PC-3 (cell line): ENCODE measurements at regions of chr5 and their contacts with region 1.

Region 1: GRCh38 chr5:80982093-80982492 is 21.9 kb downstream of the RASGRF2 start:
- DNase-seq: no peak
- ATAC-seq: no peak
- H3K4me3 ChIP-seq: no peak overlapping the region
- H3K27ac ChIP-seq: no peak overlapping the region
- H3K4me1 ChIP-seq: 0 out of 2 replicates have a peak, but pooled peaks cover under 1% of the 10 kb centered on the region
- H3K27me3 ChIP-seq: no peaks in the 10 kb centered on the region
- CTCF ChIP-seq: no peak

Region 2: DNA sequence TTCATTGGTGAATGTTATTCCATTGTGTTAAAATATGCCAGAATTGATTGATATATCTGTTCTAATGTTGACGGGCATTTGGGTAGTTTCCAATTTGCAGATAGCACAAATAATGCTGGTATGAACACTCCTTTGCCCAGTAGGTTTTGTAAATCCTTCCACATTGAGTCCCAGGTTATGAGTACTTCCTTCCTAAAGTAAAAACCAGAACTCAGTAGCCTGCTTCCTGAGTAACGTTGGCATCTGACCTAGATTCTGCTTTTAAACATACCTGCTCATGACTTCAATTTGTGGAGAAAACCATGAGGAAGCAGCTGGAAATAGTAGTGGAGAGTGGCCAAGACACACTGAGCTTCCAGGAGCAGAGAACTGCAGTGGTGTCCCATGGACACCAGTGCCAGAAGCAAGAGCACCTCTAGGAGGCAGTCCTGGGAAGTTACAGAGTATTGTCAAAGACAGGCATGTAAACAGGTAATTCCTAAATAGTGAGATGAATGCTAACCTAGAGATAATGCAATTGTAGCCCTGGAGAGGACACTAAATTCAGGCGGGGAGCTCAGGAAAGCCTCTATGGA is 46.2 kb before region 1 on chr5:
- CTCF ChIA-PET with region 1: no interaction called
- POLR2A ChIA-PET with region 1: no interaction called
- intact Hi-C with region 1: no loop called
- DNase-seq: peak; percentile 18
- ATAC-seq: peak; percentile 27; the same call in 1 of the 2 replicates
- H3K4me3 ChIP-seq: no peak overlapping the region
- H3K27ac ChIP-seq: no peak overlapping the region
- H3K4me1 ChIP-seq: peaks cover 7% of the 10 kb centered on the region; the same call in 1 of the 2 replicates
- H3K27me3 ChIP-seq: no peaks in the 10 kb centered on the region
- CTCF ChIP-seq: peak; percentile 28; the same call in 1 of the 2 replicates

Region 3: GRCh38 chr5:80967500-80968181 is 14.5 kb before region 1 on chr5:
- CTCF ChIA-PET with region 1: no interaction called
- POLR2A ChIA-PET with region 1: no interaction called
- intact Hi-C with region 1: loop called (anchors 2 kb)
- DNase-seq: peak; percentile 85
- ATAC-seq: peak; percentile 91
- H3K4me3 ChIP-seq: no peak overlapping the region
- H3K27ac ChIP-seq: peak overlapping the region; percentile 81
- H3K4me1 ChIP-seq: peaks cover 37% of the 10 kb centered on the region
- H3K27me3 ChIP-seq: no peaks in the 10 kb centered on the region
- CTCF ChIP-seq: no peak